PC-3 (cell line): ENCODE measurements at regions of chr20 and their contacts with region 1.

Region 1: DNA sequence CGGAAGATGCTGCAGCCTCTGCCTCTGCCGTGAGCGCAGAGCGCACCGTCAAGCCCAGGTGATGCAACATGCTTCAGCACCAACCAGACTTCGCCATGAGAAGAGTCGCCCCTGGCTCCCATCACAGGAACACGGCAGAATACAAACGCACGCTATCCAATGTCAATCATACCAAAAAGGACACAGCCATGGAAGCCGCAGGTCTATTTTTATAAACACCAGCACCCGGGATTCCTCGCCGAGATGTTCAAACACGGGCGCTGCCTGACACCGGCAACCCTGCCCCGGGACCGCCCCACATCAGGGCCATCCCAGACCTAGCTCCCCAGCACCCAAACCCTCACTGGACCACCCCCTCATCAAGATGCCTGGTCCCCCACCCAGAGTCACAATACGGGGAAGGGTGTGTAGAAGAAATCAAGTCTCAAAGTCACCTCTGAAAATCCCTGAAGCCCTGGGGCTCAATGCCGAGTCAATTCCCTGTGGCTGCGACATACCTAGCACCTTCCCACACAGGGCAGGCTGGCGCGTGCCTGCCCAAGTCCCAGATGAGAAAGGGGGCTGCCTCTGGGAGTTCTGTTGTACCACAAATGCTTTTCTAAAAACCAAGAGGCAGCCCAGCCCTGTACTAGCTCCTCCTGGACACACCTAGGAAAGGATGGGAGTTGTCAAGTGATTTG is 17.9 kb downstream of the TAF4 start:
- DNase-seq: no peak
- ATAC-seq: no peak
- H3K4me3 ChIP-seq: no peak overlapping the region
- H3K27ac ChIP-seq: no peak overlapping the region
- H3K4me1 ChIP-seq: no peaks in the 10 kb centered on the region
- H3K27me3 ChIP-seq: no peaks in the 10 kb centered on the region
- CTCF ChIP-seq: no peak

Region 2: GRCh38 chr20:60802676-60803075 is 1245.1 kb before region 1 on chr20:
- CTCF ChIA-PET with region 1: no interaction called
- POLR2A ChIA-PET with region 1: no interaction called
- intact Hi-C with region 1: no loop called
- DNase-seq: no peak
- ATAC-seq: no peak
- H3K4me3 ChIP-seq: no peak overlapping the region
- H3K27ac ChIP-seq: no peak overlapping the region
- H3K4me1 ChIP-seq: no peaks in the 10 kb centered on the region
- H3K27me3 ChIP-seq: no peaks in the 10 kb centered on the region
- CTCF ChIP-seq: no peak

Region 3: GRCh38 chr20:62258499-62259293 is 210.9 kb after region 1 on chr20:
- CTCF ChIA-PET with region 1: no interaction called
- POLR2A ChIA-PET with region 1: interaction called, 13 read pairs
- intact Hi-C with region 1: no loop called
- DNase-seq: peak; percentile 47
- ATAC-seq: peak; percentile 98
- H3K4me3 ChIP-seq: no peak overlapping the region
- H3K27ac ChIP-seq: no peak overlapping the region
- H3K4me1 ChIP-seq: peaks cover 9% of the 10 kb centered on the region; the same call in 1 of the 2 replicates
- H3K27me3 ChIP-seq: no peaks in the 10 kb centered on the region
- CTCF ChIP-seq: no peak